Motor neuron (in vitro differentiated cells): ENCODE measurements at regions of chr1 and their contacts with region 1.

Region 1: DNA sequence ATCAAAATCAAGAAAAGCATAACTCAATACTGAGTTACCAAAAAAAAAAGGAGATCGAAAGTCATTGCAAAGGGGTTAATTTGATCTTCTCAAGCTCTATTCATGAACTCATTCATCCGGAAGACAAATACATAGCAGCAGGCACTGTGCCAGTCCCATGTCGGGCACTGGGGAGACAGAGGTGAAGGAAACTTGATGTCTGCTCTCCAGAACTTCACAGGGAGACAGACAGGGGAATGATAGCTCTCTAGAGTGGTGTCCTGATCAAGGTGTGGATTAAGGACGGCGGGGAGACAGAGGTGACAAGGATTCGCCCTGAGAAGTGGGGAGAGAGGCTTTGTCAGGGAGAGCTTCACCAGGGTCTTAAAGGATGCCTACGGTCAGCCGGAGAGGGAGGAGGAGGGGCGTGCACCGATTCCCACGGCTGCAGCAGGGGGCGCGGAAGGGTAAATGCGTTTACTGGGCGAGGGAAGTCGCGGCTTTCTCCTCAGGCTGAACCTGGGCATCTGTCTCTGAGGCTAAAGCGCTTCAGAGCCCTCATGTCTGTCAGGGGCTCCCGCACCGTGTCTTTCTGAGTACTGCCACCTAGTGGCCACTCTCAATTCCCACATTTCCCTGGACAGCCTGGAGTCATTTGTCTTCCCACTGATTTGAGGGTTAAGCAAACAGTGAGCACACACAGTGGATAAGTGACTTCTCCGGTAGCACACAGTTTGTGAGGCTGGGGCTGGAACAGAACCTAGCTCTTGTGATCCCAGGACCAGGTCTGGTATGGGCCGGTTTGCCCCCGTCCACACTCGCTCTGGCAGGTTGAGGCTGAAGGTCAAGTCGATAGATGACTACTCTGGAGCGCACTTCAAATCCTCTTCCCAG is 152.8 kb downstream of the TENT5C start:
- ATAC-seq: peak; percentile 85 to 100 (median 98)
- H3K4me3 ChIP-seq: peak overlapping the region in 4 of 5 donors; percentile 19 to 31 (median 20)
- H3K27ac ChIP-seq: no peak overlapping the region
- H3K4me1 ChIP-seq: peaks cover 0 to 2% of the 10 kb centered on the region in 2 donors

Region 2: GRCh38 chr1:117093870-117094621 is 664.6 kb before region 1 on chr1:
- in situ Hi-C with region 1: loop called in 1 of 9 experiments (anchors 25 kb)
- ATAC-seq: peak in 7 of 8 experiments; percentile 15 to 67 (median 48)
- H3K4me3 ChIP-seq: no peak overlapping the region
- H3K27ac ChIP-seq: peak overlapping the region in 1 of 2 donors; percentile 47
- H3K4me1 ChIP-seq: peaks cover 33 to 48% of the 10 kb centered on the region in 2 donors

Region 3: GRCh38 chr1:117512743-117513321 is 245.8 kb before region 1 on chr1:
- in situ Hi-C with region 1: loop called in 1 of 9 experiments (anchors 25 kb)
- ATAC-seq: peak in 3 of 8 experiments; percentile 20 to 78 (median 33)
- H3K4me3 ChIP-seq: no peak overlapping the region
- H3K27ac ChIP-seq: no peak overlapping the region
- H3K4me1 ChIP-seq: no peaks in the 10 kb centered on the region

Region 4: DNA sequence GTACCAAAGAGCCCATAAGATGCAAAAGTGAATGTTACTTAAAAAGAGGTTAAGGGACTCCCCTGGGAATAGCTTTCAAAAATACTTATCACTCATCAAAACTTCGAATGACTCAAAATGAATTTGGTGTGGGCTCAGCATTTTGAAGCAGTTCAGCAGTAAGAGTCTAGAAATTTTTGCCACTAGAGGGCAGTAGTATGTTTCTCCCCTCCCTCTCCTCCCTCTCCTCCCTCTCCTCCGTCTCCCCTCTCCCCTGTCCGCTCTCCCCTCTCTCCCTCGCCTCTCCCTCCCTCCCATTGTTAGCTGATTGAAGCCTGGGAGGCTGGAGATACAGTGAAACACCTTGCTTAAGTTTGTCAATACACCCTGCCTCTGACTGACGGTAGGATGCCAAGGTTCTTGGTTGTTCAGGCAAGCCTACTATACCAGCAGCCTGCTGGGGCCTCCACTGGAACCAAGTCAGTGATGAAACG is 223.6 kb before region 1 on chr1:
- in situ Hi-C with region 1: loop called in 2 of 9 experiments (anchors 25 kb)
- ATAC-seq: peak; percentile 38 to 98 (median 72)
- H3K4me3 ChIP-seq: no peak overlapping the region
- H3K27ac ChIP-seq: no peak overlapping the region
- H3K4me1 ChIP-seq: no peaks in the 10 kb centered on the region